Calu3 (cell line): ENCODE measurements at regions of chr12 and their contacts with region 1.

Region 1: DNA sequence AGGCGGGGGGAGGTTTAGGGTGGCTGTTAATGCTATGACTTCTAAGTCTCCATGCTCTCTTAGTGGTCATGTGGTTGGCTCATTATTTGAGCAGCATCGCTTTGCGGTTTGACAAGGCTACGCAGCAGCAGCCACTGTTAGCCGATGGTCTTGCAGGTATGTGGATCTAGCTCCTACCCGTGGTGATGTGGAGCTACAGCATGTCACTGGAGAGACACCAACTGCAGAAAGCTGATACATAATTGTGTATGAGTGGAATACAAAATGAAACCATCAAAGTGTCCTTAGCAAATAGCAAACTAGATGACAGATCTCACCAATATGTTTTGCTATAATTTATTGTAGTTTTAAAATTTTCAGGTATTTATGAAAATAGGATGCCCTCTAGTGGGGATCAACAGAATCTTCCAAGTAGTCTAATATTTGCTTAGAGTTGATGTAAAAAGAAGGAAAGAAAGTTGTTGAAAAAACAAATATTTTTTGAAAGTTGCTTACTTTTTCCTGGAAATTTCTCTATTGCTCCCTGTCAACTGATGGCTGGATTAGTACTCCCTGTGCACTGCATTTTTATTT is 94.9 kb downstream of the NAV3 start:
- DNase-seq: peak; percentile 80
- H3K4me3 Mint-ChIP-seq: no peak overlapping the region
- H3K27ac Mint-ChIP-seq: no peak overlapping the region
- H3K4me1 Mint-ChIP-seq: no peaks in the 10 kb centered on the region
- H3K27me3 Mint-ChIP-seq: no peaks in the 10 kb centered on the region
- CTCF ChIP-seq: peak; percentile 99

Region 2: DNA sequence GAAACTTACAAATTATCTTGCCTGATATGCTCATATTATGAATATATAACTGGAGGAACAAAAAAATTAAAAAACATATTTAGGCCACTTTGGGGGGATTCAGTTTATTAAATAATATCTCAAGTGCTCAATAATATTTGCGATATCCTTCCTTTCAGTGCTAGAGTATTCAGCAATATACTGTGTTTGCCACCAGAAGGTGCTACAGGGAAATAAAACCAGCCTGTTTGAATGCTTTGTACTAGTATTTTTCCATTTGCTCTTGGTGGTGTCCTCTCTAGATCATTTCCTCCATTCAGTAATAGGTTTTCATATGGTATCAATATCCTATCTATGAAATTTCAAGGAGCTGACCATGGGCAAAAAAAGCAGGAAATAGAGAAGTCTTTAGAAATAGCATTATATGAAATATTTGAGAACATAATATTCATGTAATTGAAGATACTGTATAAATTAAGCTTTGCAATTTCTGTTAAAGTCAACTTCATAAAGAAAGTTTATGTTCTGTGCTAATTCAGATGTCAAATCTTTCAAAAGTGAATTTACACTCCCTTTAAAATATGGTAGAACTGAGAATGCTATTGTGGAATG is 201.2 kb before region 1 on chr12:
- CTCF ChIA-PET with region 1: interaction called, 21 read pairs
- intact Hi-C with region 1: loop called (anchors 1 kb)
- DNase-seq: peak; percentile 30
- H3K4me3 Mint-ChIP-seq: no peak overlapping the region
- H3K27ac Mint-ChIP-seq: no peak overlapping the region
- H3K4me1 Mint-ChIP-seq: no peaks in the 10 kb centered on the region
- H3K27me3 Mint-ChIP-seq: no peaks in the 10 kb centered on the region
- CTCF ChIP-seq: peak; percentile 71

Region 3: DNA sequence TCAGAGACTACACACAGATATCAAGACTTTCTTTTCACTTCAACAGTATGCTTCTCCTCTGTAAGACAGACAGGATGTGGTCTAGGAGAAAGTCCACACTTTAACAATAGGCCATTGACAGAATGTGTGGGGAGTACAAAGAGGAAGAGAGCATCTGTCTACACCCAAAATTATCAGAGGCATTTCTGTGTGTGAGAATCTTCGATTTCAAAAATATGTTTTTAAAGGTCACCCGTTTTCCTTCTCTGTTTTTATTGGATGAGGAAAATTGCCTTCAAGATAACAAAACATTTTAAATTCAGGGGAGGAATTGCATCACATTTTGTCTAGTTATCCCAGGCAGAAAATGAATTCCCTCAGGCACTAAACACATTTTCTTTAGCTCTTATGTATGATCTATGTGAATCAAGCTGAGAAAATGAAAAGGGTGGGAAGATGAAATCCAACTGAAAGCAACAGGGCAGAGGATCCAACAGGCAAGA is 78.5 kb before region 1 on chr12:
- CTCF ChIA-PET with region 1: interaction called, 5 read pairs
- intact Hi-C with region 1: loop called (anchors 5 kb)
- DNase-seq: no peak
- H3K4me3 Mint-ChIP-seq: no peak overlapping the region
- H3K27ac Mint-ChIP-seq: peak overlapping the region; percentile 92
- H3K4me1 Mint-ChIP-seq: peaks cover 44% of the 10 kb centered on the region
- H3K27me3 Mint-ChIP-seq: no peaks in the 10 kb centered on the region
- CTCF ChIP-seq: no peak